ENCODE measurements at regions of chr17 and their contacts with region 1.

Region 1: DNA sequence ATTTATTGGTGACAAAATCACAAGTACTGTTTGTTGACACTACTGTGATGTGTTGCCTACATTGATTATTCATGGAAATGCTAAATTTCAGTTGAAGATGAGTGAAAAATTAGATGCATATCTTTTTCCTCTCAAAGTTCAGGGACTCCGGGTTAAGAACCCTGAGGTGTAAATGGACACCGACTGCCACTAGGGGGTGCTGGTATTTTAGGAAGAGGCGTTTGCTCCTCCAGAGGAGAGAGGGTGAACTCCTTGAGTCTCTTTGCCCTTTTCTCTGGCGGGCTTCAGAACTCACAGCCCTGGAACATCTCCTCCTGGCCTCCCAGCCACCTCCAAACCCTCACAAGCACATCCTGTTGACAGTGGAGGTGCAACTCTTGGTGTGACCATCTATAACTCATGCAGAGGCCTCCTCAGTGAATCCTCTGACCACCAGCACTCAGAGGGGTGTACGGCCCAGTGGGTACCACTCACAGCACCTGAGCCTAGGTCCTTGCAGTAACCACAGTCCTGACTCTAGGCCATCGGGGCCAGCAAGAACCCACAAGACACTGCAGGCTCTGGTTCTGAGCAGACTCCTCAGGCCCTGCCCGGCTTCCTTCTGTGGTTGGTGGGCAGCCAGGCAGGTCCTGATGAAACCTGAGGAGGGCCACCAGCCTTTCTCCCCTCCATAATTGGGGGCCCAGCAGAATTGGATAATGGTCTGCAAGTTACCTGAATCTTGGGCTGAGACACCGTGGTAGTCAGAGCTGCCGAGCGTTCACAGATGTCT is 26.2 kb upstream of the PIK3R5 start:
- DNase-seq: peak; percentile 51
- ATAC-seq: peak; percentile 87
- H3K4me3 ChIP-seq: no peak overlapping the region
- H3K27ac ChIP-seq: no peak overlapping the region
- H3K4me1 ChIP-seq: no peaks in the 10 kb centered on the region
- H3K27me3 ChIP-seq: no peaks in the 10 kb centered on the region
- CTCF ChIP-seq: peak; percentile 64 to 92 (median 90)
- POLR2A ChIP-seq: no peak
- RAD21 ChIP-seq: peak; percentile 80

Region 2: DNA sequence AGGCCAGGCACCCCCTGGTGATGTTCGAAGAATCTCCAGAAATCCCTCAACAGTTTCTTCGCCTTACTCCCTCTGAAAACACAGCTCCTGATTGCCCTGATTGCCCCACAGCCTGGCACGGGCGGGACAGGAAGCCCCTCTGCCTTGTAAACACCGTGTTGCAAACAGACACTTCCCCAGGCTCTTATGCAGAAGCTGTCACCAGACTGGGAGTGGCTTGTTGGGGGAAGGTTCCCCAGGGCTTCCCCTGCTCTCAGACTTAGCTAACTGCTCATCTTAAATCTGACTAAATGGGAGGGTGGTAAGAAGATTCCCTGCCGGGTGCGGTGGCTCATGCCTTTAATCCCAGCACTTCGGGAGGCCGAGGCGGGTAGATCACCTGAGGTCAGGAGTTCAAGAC is 37.4 kb before region 1 on chr17:
- CTCF ChIA-PET with region 1: no interaction called
- POLR2A ChIA-PET with region 1: no interaction called
- RAD21 ChIA-PET with region 1: no interaction called
- intact Hi-C with region 1: no loop called
- DNase-seq: no peak
- ATAC-seq: no peak
- H3K4me3 ChIP-seq: no peak overlapping the region
- H3K27ac ChIP-seq: no peak overlapping the region
- H3K4me1 ChIP-seq: no peaks in the 10 kb centered on the region
- H3K27me3 ChIP-seq: peaks cover 5% of the 10 kb centered on the region; the same call in 1 of the 2 replicates
- CTCF ChIP-seq: no peak
- POLR2A ChIP-seq: no peak
- RAD21 ChIP-seq: no peak

Region 3: GRCh38 chr17:9291912-9292560 is 300.3 kb after region 1 on chr17:
- CTCF ChIA-PET with region 1: no interaction called
- POLR2A ChIA-PET with region 1: no interaction called
- RAD21 ChIA-PET with region 1: no interaction called
- intact Hi-C with region 1: loop called (anchors 5 kb)
- DNase-seq: no peak
- ATAC-seq: peak; percentile 95
- H3K4me3 ChIP-seq: no peak overlapping the region
- H3K27ac ChIP-seq: no peak overlapping the region
- H3K4me1 ChIP-seq: peaks cover 0 to 8% of the 10 kb centered on the region in 2 experiments; a peak in 1 of 4 replicates
- H3K27me3 ChIP-seq: no peaks in the 10 kb centered on the region
- CTCF ChIP-seq: peak; percentile 34 to 75 (median 74); a peak in 5 of 6 replicates
- POLR2A ChIP-seq: no peak
- RAD21 ChIP-seq: peak; percentile 68